A549 (cell line): ENCODE measurements at regions of chr14 and their contacts with region 1.

Region 1: DNA sequence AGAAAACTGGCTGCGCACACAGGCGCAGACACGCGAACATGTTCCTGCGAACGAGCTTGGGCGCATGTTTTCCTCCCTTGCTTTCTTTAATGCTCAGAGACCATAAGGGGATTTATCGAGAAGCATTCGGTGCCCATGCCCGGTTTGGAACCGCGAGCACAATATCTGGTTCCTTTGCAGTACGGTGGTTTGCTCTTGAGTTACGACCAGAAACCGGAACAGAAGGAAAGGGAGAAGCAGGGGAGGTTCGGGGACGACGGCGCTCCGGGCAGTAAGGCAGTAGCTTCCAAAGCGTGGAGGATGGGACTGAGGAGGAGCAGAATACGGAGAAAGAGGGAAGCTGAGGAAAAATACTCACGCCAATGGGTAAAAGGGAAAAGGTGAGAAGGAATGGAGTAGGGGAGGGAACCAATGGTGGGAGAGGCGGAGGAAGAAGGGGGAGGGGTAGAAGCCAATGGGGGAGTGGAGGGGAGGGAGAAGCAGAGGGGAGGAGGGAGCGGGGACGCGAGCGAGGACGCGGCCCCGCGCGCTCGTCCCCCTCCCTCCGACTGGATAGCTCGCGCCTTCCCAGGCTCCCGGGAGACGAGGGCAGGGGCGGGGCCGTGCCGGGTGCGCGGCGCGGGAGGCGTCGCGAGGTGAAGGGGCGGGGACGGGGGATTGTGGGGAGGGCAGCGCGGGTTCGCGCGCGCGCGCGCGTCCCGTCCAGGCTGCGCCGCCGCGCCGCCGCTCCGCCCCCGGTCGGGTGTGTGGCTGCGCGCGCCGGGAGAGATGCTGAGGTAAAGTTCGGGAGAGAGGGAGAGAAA is 625 bp upstream of the ARHGAP5 start:
- DNase-seq: peak; percentile 74 to 97
- ATAC-seq: peak; percentile 75 to 82
- H3K4me3 ChIP-seq: peak overlapping the region; percentile 83
- H3K27ac ChIP-seq: peak overlapping the region; percentile 96 to 99
- H3K4me1 ChIP-seq: peaks cover 37% of the 10 kb centered on the region
- CTCF ChIP-seq: no peak
- EP300 ChIP-seq: no peak
- POLR2A ChIP-seq: peak; percentile 83
- RAD21 ChIP-seq: peak in 1 of 2 experiments; percentile 9; a peak in 1 of 5 replicates

Region 2: GRCh38 chr14:31456841-31457664 is 619.4 kb before region 1 on chr14 and contains the start of gene DTD2:
- CTCF ChIA-PET with region 1: no interaction called
- POLR2A ChIA-PET with region 1: interaction called, 12 read pairs
- DNase-seq: peak; percentile 81 to 96
- ATAC-seq: peak; percentile 99
- H3K4me3 ChIP-seq: peak within 1 kb of the TSS; percentile 70
- H3K27ac ChIP-seq: peak within 1 kb of the TSS; percentile 95 to 97
- H3K4me1 ChIP-seq: peaks cover 21% of the 10 kb centered on the region
- CTCF ChIP-seq: no peak
- EP300 ChIP-seq: no peak
- POLR2A ChIP-seq: peak; percentile 96
- RAD21 ChIP-seq: no peak
- polyA plus RNA-seq, gene DTD2: 26.3 and 39.5 TPM in 2 replicates

Region 3: DNA sequence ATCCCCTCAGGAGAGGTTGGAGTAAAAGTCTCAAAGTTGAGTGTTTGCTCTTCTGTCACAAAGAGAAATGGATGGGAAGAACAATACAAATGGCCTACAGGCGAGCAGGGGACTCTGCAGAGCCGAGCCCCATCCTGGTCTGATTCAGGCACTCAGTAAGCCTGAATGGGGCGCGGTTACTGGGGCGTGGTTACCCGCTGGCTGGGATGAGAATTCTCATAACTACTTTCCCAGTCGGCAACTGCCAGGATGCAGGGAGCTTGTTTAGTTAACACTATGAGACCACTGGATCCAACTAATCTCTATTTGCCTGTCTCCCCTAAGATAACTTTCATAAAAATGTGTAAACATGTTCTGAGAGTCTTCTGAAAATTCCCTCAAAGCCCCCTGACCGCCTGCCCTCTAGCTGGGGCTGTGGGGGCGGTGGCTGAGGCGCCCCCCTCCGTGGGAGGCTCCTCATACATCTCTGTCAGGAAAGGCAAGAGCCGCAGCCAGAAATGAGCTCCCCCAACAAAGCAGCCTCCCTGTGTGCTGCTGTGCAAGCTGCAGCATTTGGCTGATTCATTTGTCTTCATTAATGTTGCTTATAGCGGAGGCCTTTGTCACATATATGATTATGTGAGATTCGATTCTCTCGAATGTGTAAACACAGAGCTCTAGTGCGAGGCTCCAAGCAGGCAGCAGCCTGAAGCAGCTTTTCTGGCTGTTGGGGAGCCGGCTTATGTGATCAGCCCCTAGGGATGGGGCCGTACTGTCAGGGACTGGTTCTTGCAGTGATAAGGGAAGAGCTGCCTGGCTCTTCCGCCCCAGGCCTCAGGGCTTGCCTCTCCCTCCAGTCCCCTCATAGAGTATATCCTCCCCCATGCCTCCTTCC is 125.5 kb before region 1 on chr14:
- CTCF ChIA-PET with region 1: interaction called, 13 read pairs
- POLR2A ChIA-PET with region 1: interaction called, 12 read pairs
- DNase-seq: peak; percentile 73 to 89
- ATAC-seq: peak; percentile 94 to 96
- H3K4me3 ChIP-seq: no peak overlapping the region
- H3K27ac ChIP-seq: peak overlapping the region; percentile 82 to 83
- H3K4me1 ChIP-seq: peaks cover 82% of the 10 kb centered on the region
- CTCF ChIP-seq: no peak
- EP300 ChIP-seq: 0 out of 5 replicates have a peak, but pooled peaks of 1 of the 2 experiments have one; percentile 27
- POLR2A ChIP-seq: no peak
- RAD21 ChIP-seq: no peak

Region 4: DNA sequence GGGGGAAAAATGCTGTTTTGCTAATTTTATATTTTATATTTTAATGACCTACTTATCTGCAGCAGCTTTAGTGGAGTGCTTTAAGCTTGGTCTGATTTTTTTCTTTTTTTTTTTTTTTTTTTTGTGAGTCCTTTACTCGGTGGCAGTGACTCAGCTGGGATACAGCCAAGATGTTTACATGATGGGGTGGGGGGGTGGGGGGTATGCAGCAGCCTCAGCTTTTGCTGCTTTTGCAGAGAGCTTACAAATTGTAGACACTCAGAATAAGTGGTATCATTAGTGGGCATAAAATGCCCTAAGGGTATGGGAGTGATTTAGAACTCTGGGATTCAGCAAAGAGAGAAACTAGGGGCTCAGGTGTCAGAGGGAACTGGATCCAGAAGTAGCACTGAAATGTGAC is 37.6 kb before region 1 on chr14:
- CTCF ChIA-PET with region 1: no interaction called
- POLR2A ChIA-PET with region 1: interaction called, 10 read pairs
- DNase-seq: no peak
- ATAC-seq: no peak
- H3K4me3 ChIP-seq: no peak overlapping the region
- H3K27ac ChIP-seq: no peak overlapping the region
- H3K4me1 ChIP-seq: peaks cover 19% of the 10 kb centered on the region; the same call in 2 of the 3 replicates
- CTCF ChIP-seq: no peak
- EP300 ChIP-seq: no peak
- POLR2A ChIP-seq: no peak
- RAD21 ChIP-seq: no peak

Region 5: GRCh38 chr14:32150392-32150791 is 73.9 kb after region 1 on chr14:
- CTCF ChIA-PET with region 1: no interaction called
- POLR2A ChIA-PET with region 1: no interaction called
- DNase-seq: peak in 1 of 2 experiments; percentile 45
- ATAC-seq: peak in 1 of 2 experiments; percentile 60; a peak in 3 of 6 replicates
- H3K4me3 ChIP-seq: no peak overlapping the region
- H3K27ac ChIP-seq: peak overlapping the region in 1 of 2 experiments; percentile 66; a peak in 3 of 6 replicates
- H3K4me1 ChIP-seq: peaks cover 17% of the 10 kb centered on the region; the same call in 2 of the 3 replicates
- CTCF ChIP-seq: no peak
- EP300 ChIP-seq: no peak
- POLR2A ChIP-seq: no peak
- RAD21 ChIP-seq: no peak

Region 6: GRCh38 chr14:32252030-32252670 is 175.7 kb after region 1 on chr14:
- CTCF ChIA-PET with region 1: interaction called, 61 read pairs
- POLR2A ChIA-PET with region 1: interaction called, 4 read pairs
- DNase-seq: peak; percentile 60 to 80
- ATAC-seq: peak; percentile 87 to 94
- H3K4me3 ChIP-seq: no peak overlapping the region
- H3K27ac ChIP-seq: peak overlapping the region; percentile 1 to 37; a peak in 1 of 6 replicates
- H3K4me1 ChIP-seq: peaks cover 18% of the 10 kb centered on the region; the same call in 2 of the 3 replicates
- CTCF ChIP-seq: peak; percentile 90
- EP300 ChIP-seq: no peak
- POLR2A ChIP-seq: no peak
- RAD21 ChIP-seq: peak; percentile 96 to 99